Mammary epithelial cell (primary cell): ENCODE measurements at regions of chr3 and their contacts with region 1.

Region 1: DNA sequence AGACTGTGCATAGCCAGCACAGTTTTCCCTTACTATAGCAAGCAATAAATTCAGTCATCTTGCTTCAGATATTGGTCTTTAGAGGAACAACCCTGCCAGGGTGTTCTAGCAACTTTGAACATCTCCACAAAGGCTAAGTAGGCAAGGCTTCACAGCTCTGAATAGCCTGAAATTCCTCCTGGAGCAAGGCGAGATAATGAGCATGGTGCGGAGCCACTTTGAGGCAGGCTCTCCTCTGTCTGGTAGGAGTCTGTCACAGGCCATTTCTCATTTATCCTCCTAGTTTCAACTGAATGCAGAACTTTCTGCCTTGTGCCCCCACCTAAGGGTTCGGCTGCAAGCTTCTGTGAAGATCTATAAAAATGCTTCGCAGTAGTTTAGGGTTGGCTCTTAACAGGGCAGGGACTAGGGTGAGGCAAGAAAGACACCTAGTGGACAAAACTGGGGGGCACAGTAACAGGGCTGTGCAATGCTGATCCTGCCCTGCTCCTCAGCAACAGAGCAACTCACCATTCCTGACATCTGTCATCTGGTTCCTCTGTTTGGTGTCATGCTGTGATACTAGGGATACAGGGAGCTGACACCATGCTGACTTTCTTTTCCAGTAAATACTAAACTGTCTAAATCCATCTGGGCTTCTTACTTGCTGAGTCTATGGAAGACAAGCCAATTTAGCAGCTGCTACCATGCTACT is 16.6 kb upstream of the EHHADH start:
- DNase-seq: peak; percentile 23
- H3K4me3 ChIP-seq: no peak overlapping the region
- H3K27ac ChIP-seq: no peak overlapping the region
- H3K4me1 ChIP-seq: peaks cover 4% of the 10 kb centered on the region
- H3K27me3 ChIP-seq: no peaks in the 10 kb centered on the region
- CTCF ChIP-seq: peak; percentile 52 to 55

Region 2: GRCh38 chr3:184786280-184786941 is 484.0 kb before region 1 on chr3:
- CTCF ChIA-PET with region 1: no interaction called
- dilution Hi-C with region 1: no loop called
- in situ Hi-C with region 1: no loop called
- intact Hi-C with region 1: no loop called
- DNase-seq: peak; percentile 68
- H3K4me3 ChIP-seq: no peak overlapping the region
- H3K27ac ChIP-seq: peak overlapping the region; percentile 35
- H3K4me1 ChIP-seq: peaks cover 45% of the 10 kb centered on the region
- H3K27me3 ChIP-seq: no peaks in the 10 kb centered on the region
- CTCF ChIP-seq: no peak

Region 3: DNA sequence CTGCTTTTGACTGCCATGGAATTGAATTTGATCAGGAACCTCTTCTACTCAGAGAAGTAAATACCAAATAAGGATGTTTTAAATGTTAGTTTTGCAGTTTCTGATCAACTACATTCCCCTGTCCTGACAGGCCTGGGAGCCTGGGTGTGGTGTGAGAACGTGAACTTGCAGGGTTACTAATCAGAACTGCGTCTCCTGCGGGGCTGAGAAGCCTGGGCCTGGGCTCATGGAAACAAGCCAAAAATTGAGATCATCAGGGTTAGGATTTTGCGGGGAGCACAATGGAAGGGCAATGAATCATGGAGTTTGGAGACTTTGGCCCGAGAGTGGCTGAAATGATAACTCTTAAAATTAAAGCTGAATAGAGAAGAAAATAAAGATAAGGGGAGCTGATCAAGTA is 69.8 kb before region 1 on chr3:
- CTCF ChIA-PET with region 1: no interaction called
- dilution Hi-C with region 1: loop called (anchors 5 kb)
- in situ Hi-C with region 1: no loop called
- intact Hi-C with region 1: no loop called
- DNase-seq: peak; percentile 95
- H3K4me3 ChIP-seq: no peak overlapping the region
- H3K27ac ChIP-seq: peak overlapping the region; percentile 90
- H3K4me1 ChIP-seq: peaks cover 19% of the 10 kb centered on the region
- H3K27me3 ChIP-seq: no peaks in the 10 kb centered on the region
- CTCF ChIP-seq: no peak

Region 4: GRCh38 chr3:185233328-185233727 is 37.1 kb before region 1 on chr3:
- CTCF ChIA-PET with region 1: no interaction called
- dilution Hi-C with region 1: no loop called
- in situ Hi-C with region 1: no loop called
- intact Hi-C with region 1: no loop called
- DNase-seq: no peak
- H3K4me3 ChIP-seq: no peak overlapping the region
- H3K27ac ChIP-seq: no peak overlapping the region
- H3K4me1 ChIP-seq: no peaks in the 10 kb centered on the region
- H3K27me3 ChIP-seq: no peaks in the 10 kb centered on the region
- CTCF ChIP-seq: no peak

Region 5: GRCh38 chr3:185347399-185347798 is 77.0 kb after region 1 on chr3:
- CTCF ChIA-PET with region 1: no interaction called
- dilution Hi-C with region 1: loop called (anchors 5 kb)
- in situ Hi-C with region 1: no loop called
- intact Hi-C with region 1: no loop called
- DNase-seq: no peak
- H3K4me3 ChIP-seq: no peak overlapping the region
- H3K27ac ChIP-seq: no peak overlapping the region
- H3K4me1 ChIP-seq: peaks cover 9% of the 10 kb centered on the region
- H3K27me3 ChIP-seq: no peaks in the 10 kb centered on the region
- CTCF ChIP-seq: no peak